Left colon (tissue), 2 donors: ENCODE measurements at regions of chr11 and their contacts with region 1.

Region 1: GRCh38 chr11:127521413-127521812 is 520.8 kb upstream of the KIRREL3 start:
- DNase-seq: no peak
- ATAC-seq: no peak

Region 2: DNA sequence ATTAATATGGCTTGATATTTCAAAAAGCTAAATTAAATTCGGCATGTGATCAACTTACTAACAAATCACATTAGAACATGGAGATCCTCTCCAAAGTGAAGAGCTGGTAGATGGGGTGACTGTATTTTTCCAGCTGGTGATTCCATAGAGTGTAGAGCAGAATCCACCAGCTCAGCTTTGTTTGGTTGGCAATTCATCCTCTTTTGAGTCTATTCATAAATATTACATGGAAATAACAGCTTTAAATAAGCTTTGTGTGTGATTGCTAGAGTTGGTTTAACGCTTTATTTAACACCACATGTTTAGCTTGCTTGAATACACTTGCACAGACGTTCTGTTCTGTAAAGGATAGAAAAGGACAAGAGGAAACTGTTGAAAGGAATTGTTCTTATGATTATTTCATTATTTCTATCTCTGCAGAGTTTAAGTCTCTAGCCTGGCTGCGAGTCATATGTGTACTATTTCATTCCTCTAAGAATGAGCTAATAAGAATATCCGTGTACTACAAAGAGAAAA is 217.4 kb after region 1 on chr11:
- intact Hi-C with region 1: loop called in 1 of 2 experiments (anchors 5 kb)
- DNase-seq: no peak
- ATAC-seq: no peak